Endothelial cell of umbilical vein (primary cell): ENCODE measurements at regions of chr11 and their contacts with region 1.

Region 1: DNA sequence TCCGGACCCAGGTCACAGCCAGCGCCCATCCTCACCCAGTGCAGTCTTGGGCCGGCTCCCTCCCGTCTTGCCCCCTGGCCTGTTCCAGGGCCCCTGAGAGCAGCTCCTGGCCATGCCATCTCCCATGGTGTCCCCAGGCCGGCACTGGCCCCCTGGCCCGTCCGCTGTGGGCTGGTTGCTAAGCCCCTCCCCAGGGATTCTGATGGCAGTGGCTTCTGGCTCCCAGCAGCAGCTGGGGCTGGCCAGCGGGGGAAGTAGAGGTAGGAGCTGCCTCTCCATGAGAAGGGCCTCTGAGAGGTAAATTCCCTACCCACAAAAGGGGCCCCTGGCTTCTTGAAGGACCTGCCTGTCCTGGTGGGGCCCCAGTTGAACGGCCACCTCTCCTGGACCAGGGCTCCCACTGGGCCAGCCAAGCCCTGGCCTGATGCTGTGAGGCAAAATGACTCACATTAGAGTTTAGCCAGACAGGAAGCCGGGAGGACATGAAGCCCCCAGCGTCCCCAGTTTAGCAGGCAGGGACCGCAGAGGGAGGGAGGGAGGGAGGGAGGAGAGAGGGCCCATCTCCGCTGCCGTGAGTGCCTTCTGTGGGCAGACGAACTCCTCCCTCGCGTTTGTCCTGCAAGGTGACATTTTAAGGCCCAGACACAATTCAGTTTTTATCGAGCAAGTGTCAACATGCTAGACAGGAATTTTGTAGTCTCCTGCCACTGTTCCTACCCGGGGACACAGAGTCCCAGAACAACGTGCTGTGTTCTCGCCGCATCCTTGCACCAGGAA is 32.9 kb upstream of the GAL start:
- DNase-seq: no peak
- H3K4me3 ChIP-seq: no peak overlapping the region
- H3K27ac ChIP-seq: no peak overlapping the region
- H3K4me1 ChIP-seq: no peaks in the 10 kb centered on the region
- H3K27me3 ChIP-seq: peaks cover 6 to 14% of the 10 kb centered on the region in 2 experiments
- CTCF ChIP-seq: no peak
- POLR2A ChIP-seq: no peak

Region 2: GRCh38 chr11:68051191-68052144 is 599.9 kb before region 1 on chr11:
- CTCF ChIA-PET with region 1: no interaction called
- POLR2A ChIA-PET with region 1: no interaction called
- dilution Hi-C with region 1: no loop called
- intact Hi-C with region 1: no loop called
- DNase-seq: no peak
- H3K4me3 ChIP-seq: no peak overlapping the region
- H3K27ac ChIP-seq: no peak overlapping the region
- H3K4me1 ChIP-seq: no peaks in the 10 kb centered on the region
- H3K27me3 ChIP-seq: no peaks in the 10 kb centered on the region
- CTCF ChIP-seq: no peak
- POLR2A ChIP-seq: no peak

Region 3: GRCh38 chr11:68684385-68685356 is 33.3 kb after region 1 on chr11 and contains the start of gene GAL:
- CTCF ChIA-PET with region 1: interaction called, 3 read pairs
- POLR2A ChIA-PET with region 1: no interaction called
- dilution Hi-C with region 1: no loop called
- intact Hi-C with region 1: loop called (anchors 5 kb)
- DNase-seq: no peak
- H3K4me3 ChIP-seq: peak within 1 kb of the TSS; percentile 8 to 33 (median 32)
- H3K27ac ChIP-seq: no peak within 1 kb of the TSS
- H3K4me1 ChIP-seq: no peaks in the 10 kb centered on the region
- H3K27me3 ChIP-seq: peaks cover 12 to 22% of the 10 kb centered on the region in 2 experiments
- CTCF ChIP-seq: no peak
- POLR2A ChIP-seq: no peak
- total RNA-seq, gene GAL: 6.1 and 9.8 TPM in 2 replicates